Sciatic nerve (tissue), 2 donors: ENCODE measurements at regions of chr1 and their contacts with region 1.

Region 1: DNA sequence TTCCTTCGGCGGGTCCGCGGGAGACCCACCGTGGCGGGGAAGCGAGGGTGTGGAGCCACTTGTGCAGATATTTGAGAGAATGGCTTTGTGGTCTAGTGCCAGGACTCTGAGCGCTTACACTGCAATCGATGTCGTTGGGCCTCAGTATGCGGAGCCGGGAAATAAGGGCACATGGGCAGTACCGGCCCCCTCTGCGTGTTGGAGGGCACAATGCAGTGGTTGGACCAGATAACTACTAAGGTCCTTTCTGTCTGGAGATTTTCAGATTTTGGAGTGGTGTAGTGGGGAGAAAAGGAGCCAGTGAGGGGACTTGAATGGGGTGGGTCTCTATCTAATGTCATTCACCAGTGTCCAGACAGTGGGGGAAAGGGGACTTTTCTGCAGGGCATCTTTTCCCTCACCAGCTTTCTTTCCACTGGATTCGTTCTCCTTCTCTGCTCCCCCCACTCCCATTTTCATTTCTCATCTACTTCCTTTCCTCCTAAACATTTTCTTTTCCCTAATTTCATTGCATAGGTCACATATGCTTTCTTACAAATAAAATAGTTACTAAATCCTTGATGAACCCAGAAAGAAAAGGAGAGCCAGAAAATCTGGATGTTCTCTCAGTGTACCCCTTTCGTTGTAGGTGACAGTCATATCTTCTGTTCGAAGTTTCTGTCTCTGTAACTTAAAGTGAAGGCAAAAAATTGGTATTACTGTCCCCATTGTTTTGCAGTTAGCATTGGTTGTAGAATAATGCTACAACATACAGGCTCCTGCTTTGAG is 1.3 kb downstream of the ATF3 start:
- DNase-seq: no peak
- ATAC-seq: no peak

Region 2: GRCh38 chr1:212477014-212477679 is 132.7 kb before region 1 on chr1:
- intact Hi-C with region 1: loop called (anchors 5 kb)
- DNase-seq: peak; percentile 90
- ATAC-seq: peak; percentile 90

Region 3: DNA sequence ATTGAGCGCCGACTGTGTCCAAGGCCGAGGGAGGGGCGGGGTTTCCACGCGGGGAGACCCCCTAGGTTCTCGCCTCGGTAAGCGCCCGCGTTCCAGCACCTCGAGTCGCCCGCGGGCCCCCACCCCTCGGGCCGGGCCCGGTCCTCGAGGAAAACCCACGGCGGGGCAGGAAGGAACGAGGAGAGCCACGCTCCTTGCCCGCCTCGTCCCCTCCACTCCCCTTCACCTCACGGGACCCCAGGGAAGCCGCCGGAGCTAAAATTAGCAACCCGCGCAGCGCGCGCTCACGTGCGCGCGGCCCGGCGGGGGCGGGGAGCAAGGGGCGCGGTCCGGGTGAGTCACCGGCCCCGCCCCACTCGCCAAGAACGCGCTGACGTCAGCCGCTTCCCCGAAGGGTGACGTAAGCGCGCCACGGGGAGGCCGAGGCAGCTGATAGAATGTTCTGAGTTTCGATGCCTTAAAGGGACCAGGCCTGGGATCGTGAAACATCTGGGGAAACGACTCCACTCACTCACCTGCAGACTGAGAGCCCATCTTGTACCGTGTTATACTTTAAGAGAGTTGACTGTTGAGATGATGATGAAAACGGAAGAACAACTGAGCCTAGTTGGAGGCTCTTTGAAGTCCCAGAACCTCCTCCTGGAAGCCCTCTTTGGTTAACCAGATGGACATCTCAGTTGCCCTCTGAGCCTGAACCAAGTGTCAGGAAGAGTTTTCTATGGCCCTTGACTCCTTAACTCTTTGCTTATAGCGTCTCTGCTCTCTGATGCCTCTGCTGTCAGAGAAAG is 51.0 kb before region 1 on chr1:
- intact Hi-C with region 1: no loop called
- DNase-seq: peak; percentile 96
- ATAC-seq: peak; percentile 97